Body of pancreas (tissue), 4 donors: ENCODE measurements at regions of chr15 and their contacts with region 1.

Region 1: DNA sequence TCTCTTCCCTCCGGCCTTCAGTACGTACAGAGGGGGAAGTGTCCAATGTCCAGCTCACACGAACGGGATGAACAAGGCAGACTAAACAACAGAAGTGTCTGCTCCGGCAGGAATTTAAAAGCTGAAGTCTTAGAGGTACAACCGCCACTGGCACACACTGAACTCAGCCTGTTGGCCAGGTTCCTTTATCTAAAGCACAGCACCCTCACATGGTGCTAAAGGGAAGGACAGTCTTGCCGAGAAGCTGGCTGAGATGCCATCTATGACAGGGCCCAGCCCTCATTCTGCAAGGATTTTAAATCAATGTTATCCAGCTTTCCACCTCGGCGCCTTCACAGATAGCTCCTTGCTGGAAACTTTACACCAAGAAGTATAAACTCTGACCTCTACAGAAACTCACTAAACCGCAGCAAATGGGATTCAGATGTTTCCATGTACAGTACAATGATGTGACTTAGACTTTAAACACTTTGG is 2.8 kb downstream of the ADAMTS17 start:
- DNase-seq: peak; percentile 76 to 83 (median 78)
- ATAC-seq: peak; percentile 42
- H3K4me3 ChIP-seq: no peak overlapping the region
- H3K27ac ChIP-seq: no peak overlapping the region
- H3K4me1 ChIP-seq: peaks cover 50% of the 10 kb centered on the region
- H3K27me3 ChIP-seq: no peaks in the 10 kb centered on the region
- CTCF ChIP-seq: peak; percentile 60 to 88 (median 81)
- POLR2A ChIP-seq: no peak

Region 2: DNA sequence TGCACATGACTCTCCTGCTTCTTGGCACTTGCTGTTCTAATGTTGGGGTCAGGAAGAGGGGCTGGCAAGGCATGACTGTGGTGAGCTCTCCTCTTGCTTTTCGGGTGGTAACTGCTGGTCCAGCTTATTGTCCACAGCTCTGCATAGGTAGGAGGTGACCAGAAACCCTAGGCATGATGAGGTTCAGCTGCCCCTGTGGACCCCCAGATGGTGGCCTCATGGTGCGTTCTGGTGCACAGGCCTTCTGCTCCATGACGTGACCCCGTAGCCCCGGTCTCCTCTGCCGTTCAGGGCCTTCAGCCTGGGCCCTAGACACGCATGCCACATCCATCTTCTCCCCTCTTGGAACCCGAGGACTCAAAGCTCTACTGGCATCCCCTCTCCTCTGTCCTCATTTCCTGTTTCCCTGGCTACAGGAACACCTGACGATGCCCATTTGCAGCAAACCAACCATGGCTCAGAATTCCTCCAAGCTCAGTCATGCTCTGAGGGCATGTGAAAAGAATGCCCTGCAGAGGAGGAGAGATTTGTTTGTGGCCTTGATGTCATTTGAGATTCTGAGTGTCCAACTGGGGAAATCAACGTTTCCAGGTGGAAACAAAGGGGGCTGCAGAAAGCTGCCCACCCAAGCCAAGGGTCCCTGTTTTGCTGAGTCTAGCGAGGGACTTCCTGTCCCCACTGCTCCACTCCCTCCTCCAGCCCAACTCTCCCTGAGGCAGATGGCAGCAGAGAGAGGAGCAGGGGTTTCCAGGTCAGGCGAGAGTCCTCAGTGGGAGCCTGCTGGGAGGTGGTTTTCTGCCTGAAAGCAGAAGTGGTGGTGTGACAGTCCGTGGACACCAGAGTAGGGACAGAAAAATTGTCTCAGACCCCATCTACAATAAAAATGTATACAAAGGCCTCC is 407.1 kb before region 1 on chr15:
- intact Hi-C with region 1: loop called (anchors 5 kb)
- DNase-seq: no peak
- ATAC-seq: no peak
- H3K4me3 ChIP-seq: no peak overlapping the region
- H3K27ac ChIP-seq: no peak overlapping the region
- H3K4me1 ChIP-seq: peaks cover 4% of the 10 kb centered on the region
- H3K27me3 ChIP-seq: no peaks in the 10 kb centered on the region
- CTCF ChIP-seq: no peak
- POLR2A ChIP-seq: no peak

Region 3: DNA sequence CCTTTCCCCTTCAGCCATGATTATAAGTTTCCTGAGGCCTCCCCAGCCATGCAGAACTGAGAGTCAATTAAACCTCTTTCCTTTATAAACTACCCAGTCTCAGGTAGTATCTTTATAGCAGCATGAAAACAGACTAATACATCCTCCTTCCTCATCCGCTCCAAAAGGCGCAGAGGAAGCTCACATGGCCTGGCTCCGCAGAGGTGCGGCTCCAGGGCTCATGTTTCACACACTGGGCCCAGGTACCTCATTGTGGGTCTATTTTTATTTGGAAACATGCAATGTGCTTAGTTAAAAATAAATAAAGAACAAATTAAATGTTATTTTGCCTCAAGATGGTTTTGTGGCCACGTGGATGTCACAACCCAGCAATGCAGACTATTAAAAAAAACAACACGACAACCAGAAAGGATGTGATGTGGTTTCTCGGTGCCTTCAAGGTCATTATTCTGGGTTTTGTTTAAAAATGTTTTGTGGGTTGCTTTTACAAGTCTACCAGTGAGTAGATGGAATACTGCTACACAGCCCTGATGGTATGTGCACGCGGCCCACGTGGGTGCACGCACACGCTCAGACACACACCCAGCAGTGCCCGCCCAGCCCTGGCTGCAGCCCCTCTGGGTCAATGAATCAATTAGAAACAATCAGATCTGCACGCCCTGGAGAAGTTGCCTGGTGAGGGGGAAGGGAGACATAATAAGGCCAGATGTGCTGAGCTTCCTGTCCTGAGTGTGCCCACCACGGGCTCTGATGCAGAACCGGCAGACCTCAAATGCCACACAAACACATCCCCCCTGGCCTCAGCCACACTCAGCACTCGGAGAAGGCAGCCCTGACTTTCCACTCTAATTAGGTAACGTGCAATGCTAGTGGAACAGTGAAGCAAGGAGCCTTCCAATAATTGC is 137.4 kb before region 1 on chr15:
- intact Hi-C with region 1: loop called (anchors 10 kb)
- DNase-seq: peak in 1 of 4 donors; percentile 37
- ATAC-seq: peak; percentile 22
- H3K4me3 ChIP-seq: no peak overlapping the region
- H3K27ac ChIP-seq: peak overlapping the region; percentile 62 to 83 (median 72)
- H3K4me1 ChIP-seq: peaks cover 57% of the 10 kb centered on the region
- H3K27me3 ChIP-seq: no peaks in the 10 kb centered on the region
- CTCF ChIP-seq: no peak
- POLR2A ChIP-seq: no peak

Region 4: DNA sequence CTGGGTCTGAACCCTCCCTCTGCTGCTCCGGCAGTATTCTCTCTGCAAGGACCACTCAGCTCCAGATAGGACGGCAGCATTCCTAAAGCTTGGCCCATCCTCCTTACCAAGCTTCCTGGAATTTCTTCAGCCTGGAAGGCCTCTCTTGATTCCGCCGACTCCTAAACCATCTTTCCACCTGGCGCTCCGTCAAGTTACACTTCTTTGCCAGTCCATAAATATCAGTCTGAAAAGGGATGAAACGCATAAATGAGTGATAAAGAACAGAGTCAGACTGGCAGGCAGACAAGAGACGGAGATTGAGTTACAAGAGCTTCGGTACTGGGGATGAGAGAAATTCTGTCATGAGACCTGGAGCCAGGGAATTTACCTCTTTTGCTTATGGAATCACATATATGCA is 145.4 kb after region 1 on chr15:
- intact Hi-C with region 1: no loop called
- DNase-seq: no peak
- ATAC-seq: no peak
- H3K4me3 ChIP-seq: no peak overlapping the region
- H3K27ac ChIP-seq: no peak overlapping the region
- H3K4me1 ChIP-seq: no peaks in the 10 kb centered on the region
- H3K27me3 ChIP-seq: no peaks in the 10 kb centered on the region
- CTCF ChIP-seq: no peak
- POLR2A ChIP-seq: no peak